Left colon (tissue), 2 donors: ENCODE measurements at regions of chr11 and their contacts with region 1.

Region 1: GRCh38 chr11:118488480-118489109 is 38.7 kb upstream of the TTC36 start:
- DNase-seq: peak; percentile 34 to 48
- ATAC-seq: peak; percentile 74

Region 2: DNA sequence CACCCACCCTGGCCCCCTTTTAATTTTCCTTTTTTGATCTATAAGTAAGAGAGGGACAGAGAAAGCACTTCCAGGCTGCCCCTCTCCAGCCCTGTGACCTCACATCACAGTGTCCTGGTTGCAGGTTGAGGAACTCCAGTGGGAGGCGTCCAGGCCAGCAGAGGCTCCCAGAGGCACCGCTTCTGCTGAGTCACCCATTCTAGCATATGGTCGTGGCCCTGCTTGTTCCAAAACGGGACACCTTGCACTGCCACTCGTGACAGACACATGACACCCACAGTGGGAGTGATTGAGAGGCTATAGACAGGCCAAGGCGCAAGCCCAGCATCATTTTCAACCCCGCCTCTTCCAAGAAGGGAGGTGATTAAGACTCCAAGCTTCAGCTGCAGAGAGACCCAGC is 427.7 kb before region 1 on chr11:
- intact Hi-C with region 1: no loop called
- DNase-seq: no peak
- ATAC-seq: no peak

Region 3: GRCh38 chr11:118401151-118401878 is 87.3 kb before region 1 on chr11 and contains the start of gene ATP5MG:
- intact Hi-C with region 1: loop called (anchors 10 kb)
- DNase-seq: peak; percentile 90 to 95
- ATAC-seq: peak; percentile 84
- total RNA-seq, gene ATP5MG: 233 to 328 TPM